Esophagus muscularis mucosa (tissue), 4 donors: ENCODE measurements at regions of chr7 and their contacts with region 1.

Region 1: GRCh38 chr7:100691676-100692577 is 2.1 kb downstream of the GIGYF1 start:
- DNase-seq: no peak
- H3K4me3 ChIP-seq: peak overlapping the region; percentile 91 to 97 (median 94)
- H3K27ac ChIP-seq: peak overlapping the region; percentile 47 to 89 (median 84)
- H3K4me1 ChIP-seq: peaks cover 57 to 72% (median 66%) of the 10 kb centered on the region in 4 donors
- H3K27me3 ChIP-seq: no peaks in the 10 kb centered on the region
- CTCF ChIP-seq: peak; percentile 90 to 97 (median 90)
- EP300 ChIP-seq: no peak
- POLR2A ChIP-seq: no peak

Region 2: GRCh38 chr7:100478966-100479665 is 212.8 kb before region 1 on chr7 and contains the start of gene TSC22D4:
- intact Hi-C with region 1: loop called (anchors 10 kb)
- DNase-seq: peak; percentile 98
- H3K4me3 ChIP-seq: peak within 1 kb of the TSS; percentile 79 to 100 (median 91)
- H3K27ac ChIP-seq: peak within 1 kb of the TSS; percentile 91 to 97 (median 94)
- H3K4me1 ChIP-seq: peaks cover 54 to 65% (median 64%) of the 10 kb centered on the region in 4 donors
- H3K27me3 ChIP-seq: no peaks in the 10 kb centered on the region
- CTCF ChIP-seq: no peak
- EP300 ChIP-seq: no peak
- POLR2A ChIP-seq: peak; percentile 20
- total RNA-seq, gene TSC22D4: 26.2 to 51.4 (median 33.1) TPM

Region 3: DNA sequence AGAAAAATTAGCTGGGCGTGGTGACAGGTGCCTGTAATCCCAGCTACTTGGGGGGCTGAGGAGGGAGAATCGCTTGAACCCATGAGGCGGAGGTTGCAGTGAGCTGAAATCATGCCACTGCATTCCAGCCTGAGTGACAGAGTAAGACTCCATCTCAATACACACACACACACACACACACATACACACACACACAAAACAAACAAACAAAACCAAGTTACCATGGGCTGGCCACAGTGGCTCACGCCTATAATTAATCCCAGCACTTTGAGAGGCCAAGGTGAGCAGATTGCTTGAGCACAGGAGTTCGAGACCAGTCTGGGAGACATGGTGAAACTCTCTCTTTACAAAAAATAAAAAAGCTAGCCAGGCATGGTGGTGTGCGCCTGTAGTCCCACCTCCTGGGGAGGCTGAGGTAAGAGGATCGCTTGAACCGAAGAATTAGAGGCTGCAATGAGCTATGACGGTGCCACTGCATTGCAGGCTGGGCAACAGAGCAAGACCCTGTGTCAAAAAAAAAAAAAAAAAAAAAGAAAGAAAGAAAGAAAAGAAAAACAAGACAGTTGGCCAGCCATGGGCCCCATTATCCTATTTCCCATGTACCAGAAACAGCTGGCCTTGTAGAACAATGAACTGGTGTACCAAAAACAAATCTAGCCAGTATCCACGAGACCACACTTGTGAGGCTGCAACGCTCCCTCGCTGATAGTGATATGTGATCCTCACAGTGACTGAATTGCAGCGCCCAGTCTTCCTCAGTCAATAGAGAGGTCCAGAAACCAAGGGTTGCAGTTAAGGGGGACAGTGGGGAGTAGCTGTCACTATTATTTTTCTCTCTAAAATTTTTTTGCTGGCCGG is 159.5 kb before region 1 on chr7:
- intact Hi-C with region 1: no loop called
- DNase-seq: no peak
- H3K4me3 ChIP-seq: no peak overlapping the region
- H3K27ac ChIP-seq: no peak overlapping the region
- H3K4me1 ChIP-seq: no peaks in the 10 kb centered on the region
- H3K27me3 ChIP-seq: peaks cover 0 to 9% (median 0%) of the 10 kb centered on the region in 4 donors
- CTCF ChIP-seq: no peak
- EP300 ChIP-seq: no peak
- POLR2A ChIP-seq: no peak

Region 4: GRCh38 chr7:100563809-100564400 is 128.0 kb before region 1 on chr7:
- intact Hi-C with region 1: loop called (anchors 5 kb)
- DNase-seq: no peak
- H3K4me3 ChIP-seq: no peak overlapping the region
- H3K27ac ChIP-seq: no peak overlapping the region
- H3K4me1 ChIP-seq: peaks cover 0 to 31% (median 15%) of the 10 kb centered on the region in 4 donors
- H3K27me3 ChIP-seq: no peaks in the 10 kb centered on the region
- CTCF ChIP-seq: peak in 2 of 3 experiments; percentile 90 to 94
- EP300 ChIP-seq: no peak
- POLR2A ChIP-seq: no peak

Region 5: GRCh38 chr7:100604028-100604975 is 87.6 kb before region 1 on chr7:
- intact Hi-C with region 1: loop called (anchors 5 kb)
- DNase-seq: no peak
- H3K4me3 ChIP-seq: peak overlapping the region; percentile 66 to 90 (median 74)
- H3K27ac ChIP-seq: peak overlapping the region; percentile 84 to 89 (median 86)
- H3K4me1 ChIP-seq: peaks cover 20 to 48% (median 43%) of the 10 kb centered on the region in 4 donors
- H3K27me3 ChIP-seq: no peaks in the 10 kb centered on the region
- CTCF ChIP-seq: peak; percentile 27 to 45 (median 39)
- EP300 ChIP-seq: no peak
- POLR2A ChIP-seq: peak; percentile 45

Region 6: GRCh38 chr7:100745184-100745583 is 53.3 kb after region 1 on chr7:
- intact Hi-C with region 1: no loop called
- DNase-seq: no peak
- H3K4me3 ChIP-seq: peak overlapping the region; percentile 37 to 49 (median 48)
- H3K27ac ChIP-seq: no peak overlapping the region
- H3K4me1 ChIP-seq: peaks cover 0 to 4% (median 0%) of the 10 kb centered on the region in 4 donors
- H3K27me3 ChIP-seq: peaks cover 0 to 32% (median 0%) of the 10 kb centered on the region in 4 donors
- CTCF ChIP-seq: no peak
- EP300 ChIP-seq: no peak
- POLR2A ChIP-seq: no peak

Region 7: GRCh38 chr7:101121991-101122932 is 430.3 kb after region 1 on chr7:
- intact Hi-C with region 1: no loop called
- DNase-seq: no peak
- H3K4me3 ChIP-seq: peak overlapping the region; percentile 44 to 57 (median 50)
- H3K27ac ChIP-seq: peak overlapping the region; percentile 84 to 88 (median 86)
- H3K4me1 ChIP-seq: peaks cover 56 to 61% (median 59%) of the 10 kb centered on the region in 4 donors
- H3K27me3 ChIP-seq: no peaks in the 10 kb centered on the region
- CTCF ChIP-seq: no peak
- EP300 ChIP-seq: no peak
- POLR2A ChIP-seq: no peak